Ovary (tissue), 10 donors: ENCODE measurements at regions of chr14 and their contacts with region 1.

Region 1: DNA sequence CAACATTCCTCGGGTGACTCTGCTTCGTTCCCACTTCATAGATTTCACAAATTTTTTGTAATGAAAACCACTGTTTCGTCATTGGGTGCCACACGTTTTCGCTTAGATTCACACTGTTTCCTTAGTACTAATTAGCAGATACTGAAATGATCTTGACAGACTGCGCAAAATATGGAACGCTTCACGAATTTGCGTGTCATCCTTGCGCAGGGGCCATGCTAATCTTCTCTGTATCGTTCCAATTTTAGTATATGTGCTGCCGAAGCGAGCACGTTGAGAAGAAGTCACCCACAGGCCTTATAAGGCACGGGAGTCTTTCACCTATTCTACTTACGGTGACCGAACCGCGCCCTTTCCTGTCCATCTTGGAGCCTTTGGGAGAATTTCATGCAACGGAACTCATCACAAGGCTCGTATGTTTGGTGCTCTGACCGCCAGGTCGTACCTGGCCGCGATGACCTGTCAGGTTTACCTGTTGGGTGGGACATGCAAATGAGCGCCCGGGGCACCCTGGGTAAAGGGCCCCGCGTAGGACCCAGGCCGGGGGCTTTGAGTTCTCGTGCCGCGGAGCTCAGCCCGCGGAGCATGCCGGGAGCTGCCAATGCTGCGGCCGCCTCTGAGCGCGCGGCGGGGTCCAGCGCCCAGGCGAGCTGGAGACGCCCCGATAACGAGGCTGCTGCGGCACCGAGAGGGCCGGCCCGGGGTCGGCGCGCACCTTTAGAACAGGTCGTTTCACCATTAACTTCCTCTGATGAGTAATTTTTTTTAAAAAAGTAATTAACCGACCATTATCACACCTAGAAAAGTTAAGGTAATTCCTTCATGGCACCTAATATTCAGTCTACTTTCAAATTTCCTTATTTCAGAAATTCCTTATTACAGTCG is at the start of gene RNU6-8:
- DNase-seq: peak; percentile 93 to 95 (median 94)
- H3K4me3 ChIP-seq: peak within 1 kb of the TSS; percentile 56
- H3K27ac ChIP-seq: peak within 1 kb of the TSS; percentile 85 to 90
- H3K4me1 ChIP-seq: no peaks in the 10 kb centered on the region
- H3K27me3 ChIP-seq: no peaks in the 10 kb centered on the region
- CTCF ChIP-seq: no peak
- EP300 ChIP-seq: no peak
- POLR2A ChIP-seq: peak; percentile 36
- total RNA-seq, gene RNU6-8: not detected

Region 2: DNA sequence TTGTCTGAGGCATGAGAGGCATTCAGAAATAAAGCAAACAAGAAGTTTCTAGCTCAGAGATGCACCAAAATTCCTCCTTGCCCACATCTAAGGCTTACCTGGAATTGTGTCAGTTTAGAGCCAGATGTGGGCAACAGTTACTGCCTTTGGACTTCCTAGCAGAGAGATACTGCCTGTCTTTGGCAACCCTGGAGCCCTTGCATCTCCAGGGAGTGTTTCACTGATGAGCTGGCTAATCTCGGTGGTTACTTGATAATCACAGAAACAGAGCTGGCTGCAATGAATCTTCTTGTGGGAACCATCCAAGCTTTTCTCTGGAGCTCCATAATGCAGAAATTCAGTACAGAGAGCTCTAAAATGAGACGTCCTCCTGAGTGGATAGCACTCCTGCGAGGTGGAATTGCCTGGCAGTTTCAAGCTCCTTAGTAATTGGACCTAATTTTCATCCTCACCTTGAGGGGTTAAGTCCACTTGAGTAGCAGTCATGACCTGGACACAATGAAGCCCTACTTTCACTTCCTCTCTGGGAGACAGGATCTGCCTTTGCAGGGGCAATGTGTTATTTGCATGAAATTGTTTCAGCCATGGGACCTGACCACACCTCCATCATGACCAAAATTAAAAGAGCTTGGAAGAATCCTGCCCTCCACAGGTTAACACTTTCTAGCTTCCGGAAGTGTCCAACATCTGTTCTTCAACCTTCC is 235.0 kb before region 1 on chr14:
- intact Hi-C with region 1: loop called in 1 of 4 experiments (anchors 10 kb)
- DNase-seq: no peak
- H3K4me3 ChIP-seq: no peak overlapping the region
- H3K27ac ChIP-seq: peak overlapping the region in 1 of 2 donors; percentile 64
- H3K4me1 ChIP-seq: peaks cover 17% of the 10 kb centered on the region
- H3K27me3 ChIP-seq: no peaks in the 10 kb centered on the region
- CTCF ChIP-seq: no peak
- EP300 ChIP-seq: no peak
- POLR2A ChIP-seq: no peak

Region 3: DNA sequence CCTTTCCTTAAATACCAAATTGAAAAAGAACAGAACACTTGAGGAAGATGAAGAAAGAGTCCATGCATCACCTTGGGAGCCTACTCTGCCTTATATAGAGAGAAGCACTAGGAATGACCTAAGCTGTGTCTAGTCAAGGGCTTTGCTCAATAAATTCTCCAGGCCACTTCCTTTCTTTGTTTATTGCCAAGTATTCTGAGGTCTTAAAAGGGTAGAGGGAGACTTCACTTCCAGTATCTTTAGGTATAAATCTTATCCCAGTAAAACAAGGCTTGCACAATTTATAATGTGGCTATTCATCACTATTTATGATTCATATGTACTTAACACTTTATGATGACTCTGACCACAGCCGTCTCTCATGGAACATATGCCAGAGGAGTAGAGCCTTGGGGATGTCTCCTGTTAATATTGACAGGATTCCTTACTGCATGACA is 211.2 kb before region 1 on chr14:
- intact Hi-C with region 1: no loop called
- DNase-seq: no peak
- H3K4me3 ChIP-seq: no peak overlapping the region
- H3K27ac ChIP-seq: no peak overlapping the region
- H3K4me1 ChIP-seq: no peaks in the 10 kb centered on the region
- H3K27me3 ChIP-seq: no peaks in the 10 kb centered on the region
- CTCF ChIP-seq: no peak
- EP300 ChIP-seq: no peak
- POLR2A ChIP-seq: no peak

Region 4: DNA sequence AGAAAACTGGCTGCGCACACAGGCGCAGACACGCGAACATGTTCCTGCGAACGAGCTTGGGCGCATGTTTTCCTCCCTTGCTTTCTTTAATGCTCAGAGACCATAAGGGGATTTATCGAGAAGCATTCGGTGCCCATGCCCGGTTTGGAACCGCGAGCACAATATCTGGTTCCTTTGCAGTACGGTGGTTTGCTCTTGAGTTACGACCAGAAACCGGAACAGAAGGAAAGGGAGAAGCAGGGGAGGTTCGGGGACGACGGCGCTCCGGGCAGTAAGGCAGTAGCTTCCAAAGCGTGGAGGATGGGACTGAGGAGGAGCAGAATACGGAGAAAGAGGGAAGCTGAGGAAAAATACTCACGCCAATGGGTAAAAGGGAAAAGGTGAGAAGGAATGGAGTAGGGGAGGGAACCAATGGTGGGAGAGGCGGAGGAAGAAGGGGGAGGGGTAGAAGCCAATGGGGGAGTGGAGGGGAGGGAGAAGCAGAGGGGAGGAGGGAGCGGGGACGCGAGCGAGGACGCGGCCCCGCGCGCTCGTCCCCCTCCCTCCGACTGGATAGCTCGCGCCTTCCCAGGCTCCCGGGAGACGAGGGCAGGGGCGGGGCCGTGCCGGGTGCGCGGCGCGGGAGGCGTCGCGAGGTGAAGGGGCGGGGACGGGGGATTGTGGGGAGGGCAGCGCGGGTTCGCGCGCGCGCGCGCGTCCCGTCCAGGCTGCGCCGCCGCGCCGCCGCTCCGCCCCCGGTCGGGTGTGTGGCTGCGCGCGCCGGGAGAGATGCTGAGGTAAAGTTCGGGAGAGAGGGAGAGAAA is 126.8 kb before region 1 on chr14:
- intact Hi-C with region 1: loop called in 3 of 4 experiments (anchors 2 to 5 kb)
- DNase-seq: peak; percentile 97 to 98 (median 98)
- H3K4me3 ChIP-seq: peak overlapping the region; percentile 95
- H3K27ac ChIP-seq: peak overlapping the region; percentile 95 to 99
- H3K4me1 ChIP-seq: no peaks in the 10 kb centered on the region
- H3K27me3 ChIP-seq: no peaks in the 10 kb centered on the region
- CTCF ChIP-seq: no peak
- EP300 ChIP-seq: no peak
- POLR2A ChIP-seq: peak; percentile 72

Region 5: DNA sequence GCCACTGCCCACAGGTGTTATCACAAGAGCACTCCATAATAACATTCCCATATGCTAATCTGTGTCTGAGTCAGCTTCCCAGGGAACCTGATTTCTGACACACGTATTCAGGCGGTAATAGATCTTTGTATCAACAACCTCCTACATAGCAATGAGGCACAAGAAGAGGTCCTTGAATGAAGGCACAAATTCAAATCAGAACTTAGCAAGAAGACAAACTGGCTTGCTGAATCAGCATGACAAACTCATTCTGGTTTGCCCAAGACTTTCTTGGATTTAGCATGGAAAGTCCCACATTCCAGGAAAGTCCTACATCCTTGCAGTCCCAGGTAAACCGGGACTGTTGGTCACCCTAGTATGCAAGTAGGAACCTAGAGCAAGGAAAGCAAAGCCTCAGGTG is 35.3 kb before region 1 on chr14:
- intact Hi-C with region 1: no loop called
- DNase-seq: no peak
- H3K4me3 ChIP-seq: no peak overlapping the region
- H3K27ac ChIP-seq: no peak overlapping the region
- H3K4me1 ChIP-seq: no peaks in the 10 kb centered on the region
- H3K27me3 ChIP-seq: no peaks in the 10 kb centered on the region
- CTCF ChIP-seq: no peak
- EP300 ChIP-seq: no peak
- POLR2A ChIP-seq: no peak

Region 6: GRCh38 chr14:32434180-32434579 is 230.9 kb after region 1 on chr14:
- intact Hi-C with region 1: no loop called
- DNase-seq: no peak
- H3K4me3 ChIP-seq: peak overlapping the region; percentile 6
- H3K27ac ChIP-seq: no peak overlapping the region
- H3K4me1 ChIP-seq: peaks cover 8% of the 10 kb centered on the region
- H3K27me3 ChIP-seq: no peaks in the 10 kb centered on the region
- CTCF ChIP-seq: no peak
- EP300 ChIP-seq: no peak
- POLR2A ChIP-seq: no peak